PC-3 (cell line): ENCODE measurements at regions of chr7 and their contacts with region 1.

Region 1: GRCh38 chr7:122736183-122736582 is 33.5 kb upstream of the RNF148 start:
- DNase-seq: no peak
- ATAC-seq: no peak
- H3K4me3 ChIP-seq: no peak overlapping the region
- H3K27ac ChIP-seq: no peak overlapping the region
- H3K4me1 ChIP-seq: no peaks in the 10 kb centered on the region
- H3K27me3 ChIP-seq: no peaks in the 10 kb centered on the region
- CTCF ChIP-seq: no peak

Region 2: DNA sequence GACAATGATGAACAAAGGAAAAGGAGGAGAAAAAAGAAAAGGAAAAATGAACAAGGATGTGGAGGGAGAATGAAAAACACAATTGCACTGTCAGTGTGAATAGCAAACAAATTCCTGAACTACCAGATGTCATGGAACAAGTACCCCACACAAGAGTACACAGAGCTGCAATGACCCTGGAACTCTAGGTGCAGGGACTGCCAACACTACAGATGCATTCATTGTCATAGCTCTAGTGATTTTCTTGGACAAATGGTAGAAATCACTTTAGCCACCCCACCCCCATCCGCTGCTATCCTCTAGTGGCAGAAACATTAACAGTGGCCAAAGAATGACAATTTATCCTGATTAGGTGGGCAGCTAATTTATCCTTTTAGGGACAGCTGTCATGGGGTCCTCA is 40.4 kb before region 1 on chr7:
- CTCF ChIA-PET with region 1: no interaction called
- POLR2A ChIA-PET with region 1: interaction called, 12 read pairs
- intact Hi-C with region 1: no loop called
- DNase-seq: no peak
- ATAC-seq: no peak
- H3K4me3 ChIP-seq: no peak overlapping the region
- H3K27ac ChIP-seq: no peak overlapping the region
- H3K4me1 ChIP-seq: no peaks in the 10 kb centered on the region
- H3K27me3 ChIP-seq: no peaks in the 10 kb centered on the region
- CTCF ChIP-seq: no peak